CD4-positive, alpha-beta T cell (primary cell): ENCODE measurements at regions of chr18 and their contacts with region 1.

Region 1: GRCh38 chr18:830315-830901 is 18.4 kb upstream of the YES1 start:
- DNase-seq: peak in 8 of 14 experiments; percentile 8 to 83 (median 50)
- ATAC-seq: peak; percentile 82
- H3K4me3 ChIP-seq: no peak overlapping the region
- H3K4me3 Mint-ChIP-seq: peak overlapping the region; percentile 2
- H3K27ac ChIP-seq: peak overlapping the region; percentile 7 to 49
- H3K27ac Mint-ChIP-seq: peak overlapping the region; percentile 29
- H3K4me1 ChIP-seq: peaks cover 20% of the 10 kb centered on the region
- H3K4me1 Mint-ChIP-seq: peaks cover 29% of the 10 kb centered on the region
- H3K27me3 ChIP-seq: no peaks in the 10 kb centered on the region
- H3K27me3 Mint-ChIP-seq: no peaks in the 10 kb centered on the region
- CTCF ChIP-seq: no peak

Region 2: DNA sequence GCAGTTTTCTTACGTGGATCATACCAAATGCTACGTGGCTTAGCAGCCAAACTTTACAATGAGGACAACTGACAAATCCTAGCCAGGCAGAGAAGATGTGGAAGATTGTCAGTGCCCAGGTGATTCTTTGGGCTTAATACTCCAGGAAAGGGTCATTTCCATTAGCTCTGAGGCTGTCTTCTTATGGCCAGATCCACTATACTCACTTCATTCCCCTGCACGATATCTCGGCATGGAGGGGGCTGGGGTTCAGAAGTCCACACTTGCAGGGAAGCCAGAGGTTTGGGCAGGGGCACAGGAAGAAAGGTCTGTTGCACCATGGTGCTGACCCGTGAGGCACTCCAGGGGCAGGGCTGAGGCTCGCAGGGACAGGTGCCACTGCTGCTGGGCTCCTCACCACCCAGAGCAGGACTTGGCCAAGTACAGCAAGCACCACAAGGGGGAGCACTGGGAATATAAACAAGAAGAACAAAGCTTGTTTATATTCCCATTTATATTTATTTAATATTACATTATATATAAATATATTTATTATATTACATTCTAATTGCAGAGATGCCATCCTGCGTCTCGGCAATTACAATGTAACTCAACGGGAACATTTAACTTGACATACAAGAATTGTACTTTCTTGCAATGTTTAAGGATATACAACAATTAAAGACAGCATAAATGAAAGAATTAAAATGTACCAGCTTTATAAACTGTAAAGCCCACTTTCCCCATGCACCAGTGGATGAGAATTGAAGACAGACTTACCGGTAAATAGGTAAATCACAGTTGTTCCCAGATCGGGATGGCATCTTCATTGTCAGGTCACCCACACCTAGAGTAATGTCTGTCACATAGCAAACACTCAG is 206.4 kb before region 1 on chr18:
- CTCF ChIA-PET with region 1: interaction called, 11 read pairs
- POLR2A ChIA-PET with region 1: interaction called, 7 read pairs
- intact Hi-C with region 1: loop called (anchors 2 kb)
- DNase-seq: peak; percentile 23 to 74 (median 44)
- ATAC-seq: peak; percentile 73
- H3K4me3 ChIP-seq: no peak overlapping the region
- H3K4me3 Mint-ChIP-seq: no peak overlapping the region
- H3K27ac ChIP-seq: no peak overlapping the region
- H3K27ac Mint-ChIP-seq: no peak overlapping the region
- H3K4me1 ChIP-seq: no peaks in the 10 kb centered on the region
- H3K4me1 Mint-ChIP-seq: no peaks in the 10 kb centered on the region
- H3K27me3 ChIP-seq: peaks cover 0 to 5% of the 10 kb centered on the region in 2 experiments
- H3K27me3 Mint-ChIP-seq: peaks cover 14% of the 10 kb centered on the region
- CTCF ChIP-seq: peak; percentile 70

Region 3: GRCh38 chr18:712401-713134 is 117.8 kb before region 1 on chr18 and contains the start of gene ENOSF1:
- CTCF ChIA-PET with region 1: interaction called, 11 read pairs
- POLR2A ChIA-PET with region 1: interaction called, 6 read pairs
- intact Hi-C with region 1: loop called in 1 of 2 experiments (anchors 10 kb)
- DNase-seq: peak; percentile 55 to 91 (median 73)
- ATAC-seq: peak; percentile 73
- H3K4me3 ChIP-seq: peak within 1 kb of the TSS; percentile 78
- H3K4me3 Mint-ChIP-seq: peak within 1 kb of the TSS; percentile 95
- H3K27ac ChIP-seq: peak within 1 kb of the TSS; percentile 71 to 81
- H3K27ac Mint-ChIP-seq: peak within 1 kb of the TSS; percentile 92
- H3K4me1 ChIP-seq: peaks cover 27% of the 10 kb centered on the region
- H3K4me1 Mint-ChIP-seq: peaks cover 38% of the 10 kb centered on the region
- H3K27me3 ChIP-seq: no peaks in the 10 kb centered on the region
- H3K27me3 Mint-ChIP-seq: no peaks in the 10 kb centered on the region
- CTCF ChIP-seq: peak; percentile 49
- total RNA-seq, gene ENOSF1: 37.8 to 40.1 TPM

Region 4: GRCh38 chr18:741931-742512 is 88.4 kb before region 1 on chr18:
- CTCF ChIA-PET with region 1: interaction called, 20 read pairs
- POLR2A ChIA-PET with region 1: interaction called, 28 read pairs
- intact Hi-C with region 1: loop called in 1 of 2 experiments (anchors 1 kb)
- DNase-seq: peak in 3 of 14 experiments; percentile 59 to 71 (median 71)
- ATAC-seq: peak; percentile 87
- H3K4me3 ChIP-seq: no peak overlapping the region
- H3K4me3 Mint-ChIP-seq: no peak overlapping the region
- H3K27ac ChIP-seq: no peak overlapping the region
- H3K27ac Mint-ChIP-seq: no peak overlapping the region
- H3K4me1 ChIP-seq: no peaks in the 10 kb centered on the region
- H3K4me1 Mint-ChIP-seq: peaks cover 5% of the 10 kb centered on the region
- H3K27me3 ChIP-seq: no peaks in the 10 kb centered on the region
- H3K27me3 Mint-ChIP-seq: no peaks in the 10 kb centered on the region
- CTCF ChIP-seq: peak; percentile 91

Region 5: DNA sequence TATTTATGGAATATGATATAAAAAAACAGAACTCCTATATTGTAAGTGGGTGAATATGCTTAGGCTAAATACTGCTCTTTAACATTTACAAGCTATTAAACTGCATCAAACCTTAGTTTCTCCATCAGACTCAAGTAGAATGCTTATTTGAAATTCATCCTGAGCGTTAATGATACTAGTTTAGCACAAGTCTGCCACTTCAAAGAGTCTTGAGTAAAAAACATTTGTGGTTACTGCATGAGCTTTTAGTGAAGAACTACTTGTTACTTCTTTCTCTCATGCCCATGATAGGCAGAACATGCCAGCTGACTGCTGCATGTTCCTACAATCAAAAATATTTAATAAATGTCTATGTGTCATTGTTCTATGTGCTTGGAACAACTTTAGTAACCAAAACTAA is 30.5 kb before region 1 on chr18:
- CTCF ChIA-PET with region 1: interaction called, 9 read pairs
- POLR2A ChIA-PET with region 1: interaction called, 13 read pairs
- intact Hi-C with region 1: loop called in 1 of 2 experiments (anchors 5 kb)
- DNase-seq: no peak
- ATAC-seq: no peak
- H3K4me3 ChIP-seq: no peak overlapping the region
- H3K4me3 Mint-ChIP-seq: no peak overlapping the region
- H3K27ac ChIP-seq: no peak overlapping the region
- H3K27ac Mint-ChIP-seq: no peak overlapping the region
- H3K4me1 ChIP-seq: no peaks in the 10 kb centered on the region
- H3K4me1 Mint-ChIP-seq: peaks cover 69% of the 10 kb centered on the region
- H3K27me3 ChIP-seq: no peaks in the 10 kb centered on the region
- H3K27me3 Mint-ChIP-seq: no peaks in the 10 kb centered on the region
- CTCF ChIP-seq: no peak

Region 6: DNA sequence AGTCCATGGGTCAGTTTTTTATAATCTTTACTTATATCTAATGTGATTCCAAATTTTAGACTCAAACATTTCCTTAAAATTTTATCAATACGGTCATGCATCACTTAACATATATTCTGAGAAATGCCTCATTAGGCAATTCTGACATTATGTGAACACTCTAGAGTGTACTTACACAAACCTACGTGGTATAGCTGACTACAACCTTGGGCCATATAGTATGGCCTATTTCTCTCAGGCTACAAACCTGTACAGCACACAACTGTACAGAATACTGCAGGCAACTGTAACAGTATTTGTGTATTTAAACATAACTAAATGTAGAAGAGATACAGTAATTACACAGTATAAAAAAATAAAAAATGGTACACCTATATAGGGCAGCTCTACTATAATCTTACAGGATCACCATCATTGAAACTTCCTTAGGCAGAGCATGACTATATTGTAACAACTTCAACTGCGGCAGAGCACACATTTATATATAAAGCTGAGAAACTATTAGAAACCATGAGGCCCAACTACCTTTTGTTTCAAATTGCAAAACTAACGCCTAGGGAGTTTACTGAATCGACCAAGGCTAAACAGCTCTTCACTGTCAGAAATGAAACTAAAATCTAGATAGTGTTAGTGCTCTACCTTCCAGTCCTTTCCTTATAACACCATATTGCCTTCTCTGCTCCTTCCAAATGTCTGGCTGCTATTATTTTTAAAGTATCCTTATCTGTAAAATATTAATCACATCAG is 25.2 kb before region 1 on chr18:
- CTCF ChIA-PET with region 1: interaction called, 9 read pairs
- POLR2A ChIA-PET with region 1: interaction called, 103 read pairs
- intact Hi-C with region 1: no loop called
- DNase-seq: peak in 1 of 14 experiments; percentile 22
- ATAC-seq: peak; percentile 46
- H3K4me3 ChIP-seq: no peak overlapping the region
- H3K4me3 Mint-ChIP-seq: peak overlapping the region; percentile 75
- H3K27ac ChIP-seq: no peak overlapping the region
- H3K27ac Mint-ChIP-seq: peak overlapping the region; percentile 25
- H3K4me1 ChIP-seq: peaks cover 10% of the 10 kb centered on the region
- H3K4me1 Mint-ChIP-seq: peaks cover 77% of the 10 kb centered on the region
- H3K27me3 ChIP-seq: no peaks in the 10 kb centered on the region
- H3K27me3 Mint-ChIP-seq: no peaks in the 10 kb centered on the region
- CTCF ChIP-seq: no peak

Region 7: DNA sequence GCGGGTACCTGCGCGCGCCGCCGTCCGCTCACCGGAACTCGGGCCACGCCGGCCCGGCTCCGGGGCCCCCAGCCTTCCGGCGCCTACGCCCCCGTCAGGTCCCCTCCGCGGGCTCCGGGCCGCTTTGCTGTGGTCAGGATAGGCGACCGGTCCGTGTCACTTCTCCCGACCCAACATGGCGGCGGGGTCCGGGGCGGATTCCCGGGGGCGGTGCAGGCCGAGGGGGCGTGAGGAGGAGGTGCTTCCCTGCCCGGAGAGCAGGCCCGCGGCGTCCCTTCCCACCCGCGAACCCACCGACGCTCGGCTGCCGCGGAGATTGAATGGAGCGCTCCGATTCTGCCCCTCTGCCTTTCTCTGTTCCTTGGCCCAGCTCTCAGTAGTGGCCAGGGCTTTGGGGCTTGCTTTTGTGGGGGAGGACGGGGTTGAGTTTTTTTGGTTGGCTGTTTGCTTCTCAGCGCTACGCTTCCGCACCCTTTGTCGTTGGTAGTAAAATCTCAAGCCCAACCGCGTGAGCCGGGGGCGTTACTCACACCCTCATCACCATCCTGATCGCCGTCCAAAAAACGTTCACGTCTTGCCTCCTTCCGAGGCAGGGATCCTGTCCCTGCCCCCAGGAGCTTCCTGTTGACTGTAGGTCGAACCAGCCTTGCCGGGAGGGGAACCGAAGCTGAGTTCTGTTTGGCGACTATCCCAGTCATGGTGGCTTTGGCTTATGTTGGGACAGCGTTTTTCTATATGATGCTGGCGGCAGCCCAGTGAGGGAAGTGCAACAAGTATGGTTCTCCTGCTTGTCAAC is 17.8 kb before region 1 on chr18:
- CTCF ChIA-PET with region 1: interaction called, 24 read pairs
- POLR2A ChIA-PET with region 1: interaction called, 103 read pairs
- intact Hi-C with region 1: loop called (anchors 1 kb)
- DNase-seq: peak; percentile 51 to 88 (median 68)
- ATAC-seq: peak; percentile 66
- H3K4me3 ChIP-seq: peak overlapping the region; percentile 93
- H3K4me3 Mint-ChIP-seq: peak overlapping the region; percentile 90
- H3K27ac ChIP-seq: peak overlapping the region; percentile 93 to 95
- H3K27ac Mint-ChIP-seq: peak overlapping the region; percentile 94
- H3K4me1 ChIP-seq: peaks cover 30% of the 10 kb centered on the region
- H3K4me1 Mint-ChIP-seq: peaks cover 68% of the 10 kb centered on the region
- H3K27me3 ChIP-seq: no peaks in the 10 kb centered on the region
- H3K27me3 Mint-ChIP-seq: no peaks in the 10 kb centered on the region
- CTCF ChIP-seq: no peak